Breast epithelium (tissue), 4 donors: ENCODE measurements at regions of chr2 and their contacts with region 1.

Region 1: DNA sequence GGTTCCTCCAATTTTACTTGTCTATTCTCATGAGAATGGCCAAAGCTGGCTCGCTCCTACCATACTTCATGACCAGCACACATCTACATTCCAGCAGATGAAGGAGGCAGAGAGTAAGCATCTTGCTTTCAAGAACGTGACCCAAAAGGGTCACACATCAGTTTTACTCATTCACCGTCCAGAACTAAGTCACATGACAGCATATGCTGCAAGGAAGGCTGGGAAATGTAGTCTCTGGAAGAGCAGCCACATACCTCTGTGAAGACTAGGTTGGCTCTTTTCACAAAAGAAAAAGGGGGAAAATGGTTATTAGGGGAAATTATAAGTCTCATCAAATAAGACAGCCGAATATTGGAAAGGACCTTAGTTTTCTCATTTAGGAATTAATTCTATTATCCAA is 835.3 kb downstream of the EPHA4 start:
- DNase-seq: no peak
- H3K4me3 ChIP-seq: no peak overlapping the region
- H3K27ac ChIP-seq: no peak overlapping the region
- H3K4me1 ChIP-seq: no peaks in the 10 kb centered on the region
- H3K27me3 ChIP-seq: no peaks in the 10 kb centered on the region
- CTCF ChIP-seq: no peak
- POLR2A ChIP-seq: no peak

Region 2: DNA sequence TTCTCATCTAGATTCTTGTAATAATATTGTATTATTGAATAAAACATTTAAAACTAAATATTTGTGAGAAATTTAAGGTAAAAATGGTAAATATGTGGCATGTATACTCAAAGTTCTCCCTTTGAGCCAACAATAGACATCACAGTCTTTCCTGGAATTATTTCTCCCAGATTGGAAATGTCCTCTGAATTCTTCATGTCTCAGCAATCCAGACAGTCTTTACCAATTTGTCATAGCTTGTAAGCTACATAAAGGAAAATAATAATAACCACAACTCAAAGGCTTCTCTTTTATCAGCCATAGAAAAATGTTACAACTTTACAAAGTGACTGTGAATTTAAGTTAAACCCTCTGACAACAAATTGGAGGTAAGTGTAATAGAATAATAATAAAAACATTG is 50.5 kb after region 1 on chr2:
- intact Hi-C with region 1: loop called (anchors 2 kb)
- DNase-seq: no peak
- H3K4me3 ChIP-seq: no peak overlapping the region
- H3K27ac ChIP-seq: peak overlapping the region in 1 of 2 donors; percentile 44
- H3K4me1 ChIP-seq: no peaks in the 10 kb centered on the region
- H3K27me3 ChIP-seq: no peaks in the 10 kb centered on the region
- CTCF ChIP-seq: no peak
- POLR2A ChIP-seq: no peak